ENCODE measurements at regions of chr2 and their contacts with region 1.

Region 1: DNA sequence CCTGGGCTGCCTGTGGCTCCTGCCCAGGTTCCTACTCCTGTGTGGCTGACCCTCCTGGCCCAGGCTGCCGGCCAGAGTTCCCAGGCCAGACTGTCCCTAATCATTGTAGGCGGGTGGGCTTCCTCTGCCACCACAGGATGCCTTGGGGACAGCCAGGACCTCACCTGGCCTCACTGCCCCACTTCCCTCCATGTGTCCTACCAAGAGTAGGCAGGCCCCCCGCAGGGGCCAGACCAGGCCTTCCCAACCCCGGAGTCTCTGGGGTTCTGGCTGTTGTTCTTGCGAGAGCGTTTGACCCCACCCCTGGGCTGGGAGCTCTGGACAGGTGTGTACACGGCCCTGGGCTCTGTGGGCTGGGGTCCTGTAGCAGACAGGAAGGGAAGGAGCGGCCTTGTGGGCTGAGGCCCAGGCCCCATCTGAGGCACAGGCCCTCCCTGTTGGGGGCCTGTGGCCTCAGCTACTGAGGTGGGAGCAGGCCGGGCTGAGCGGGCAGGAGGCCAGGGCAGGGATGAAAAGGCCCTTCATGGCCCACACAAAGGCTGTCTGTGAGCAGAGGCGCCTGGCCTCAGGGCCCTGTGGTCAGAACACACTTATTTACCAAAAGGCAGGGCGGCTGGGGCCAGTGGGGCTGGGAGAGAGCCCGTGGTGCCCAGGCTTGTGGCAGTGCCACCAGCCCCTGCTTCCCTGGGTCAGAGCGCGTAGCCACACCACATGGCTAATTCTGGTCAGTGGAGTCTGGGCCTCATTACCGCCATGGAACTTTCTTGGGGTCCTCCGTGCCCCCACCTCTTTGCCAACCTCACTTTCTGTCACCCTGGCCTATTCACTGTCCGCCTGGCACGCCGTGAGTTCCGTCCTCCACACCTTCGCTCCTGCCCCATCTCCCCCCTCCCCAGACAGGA is 2.0 kb downstream of the SNORC start:
- DNase-seq: no peak
- H3K4me3 ChIP-seq: no peak overlapping the region
- H3K4me3 Mint-ChIP-seq: no peak overlapping the region
- H3K27ac Mint-ChIP-seq: no peak overlapping the region
- H3K4me1 ChIP-seq: 0 out of 2 replicates have a peak, but pooled peaks cover 9% of the 10 kb centered on the region
- H3K4me1 Mint-ChIP-seq: no peaks in the 10 kb centered on the region
- H3K27me3 ChIP-seq: no peaks in the 10 kb centered on the region
- H3K27me3 Mint-ChIP-seq: no peaks in the 10 kb centered on the region
- CTCF ChIP-seq: no peak

Region 2: DNA sequence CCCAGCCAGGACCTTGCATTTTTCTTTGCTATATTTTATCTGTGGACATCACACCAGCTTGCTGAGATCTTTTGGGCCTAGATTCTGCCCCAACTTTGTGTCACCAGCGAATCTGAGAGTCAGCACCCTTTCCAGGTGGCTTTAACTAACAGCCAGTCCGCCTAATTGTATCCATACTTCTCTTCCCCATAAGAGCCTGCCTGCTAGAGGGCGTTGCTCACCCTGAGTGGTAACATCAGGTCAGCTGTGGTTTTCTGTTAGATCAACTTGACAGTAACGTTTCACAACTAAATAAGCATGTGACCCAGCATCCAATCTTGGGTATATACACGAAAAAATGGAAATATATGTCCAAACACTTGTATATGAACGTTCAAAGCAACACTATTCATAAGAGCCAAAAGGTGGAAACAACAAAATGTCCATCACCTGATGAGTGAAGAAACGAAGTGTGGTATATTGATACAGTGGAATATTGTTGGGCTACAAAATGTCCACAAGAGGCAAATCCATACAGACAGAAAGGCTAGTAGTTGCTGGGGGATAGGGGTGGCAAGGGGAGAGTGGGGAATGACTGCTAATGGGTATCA is 213.8 kb before region 1 on chr2:
- CTCF ChIA-PET with region 1: interaction called, 11 read pairs
- POLR2A ChIA-PET with region 1: no interaction called
- intact Hi-C with region 1: no loop called
- DNase-seq: no peak
- H3K4me3 ChIP-seq: no peak overlapping the region
- H3K4me3 Mint-ChIP-seq: no peak overlapping the region
- H3K27ac Mint-ChIP-seq: no peak overlapping the region
- H3K4me1 ChIP-seq: no peaks in the 10 kb centered on the region
- H3K4me1 Mint-ChIP-seq: no peaks in the 10 kb centered on the region
- H3K27me3 ChIP-seq: no peaks in the 10 kb centered on the region
- H3K27me3 Mint-ChIP-seq: no peaks in the 10 kb centered on the region
- CTCF ChIP-seq: peak in 1 of 2 experiments; percentile 9

Measured in Caco-2 (cell line).